ENCODE measurements at regions of chr1 and their contacts with region 1.

Region 1: DNA sequence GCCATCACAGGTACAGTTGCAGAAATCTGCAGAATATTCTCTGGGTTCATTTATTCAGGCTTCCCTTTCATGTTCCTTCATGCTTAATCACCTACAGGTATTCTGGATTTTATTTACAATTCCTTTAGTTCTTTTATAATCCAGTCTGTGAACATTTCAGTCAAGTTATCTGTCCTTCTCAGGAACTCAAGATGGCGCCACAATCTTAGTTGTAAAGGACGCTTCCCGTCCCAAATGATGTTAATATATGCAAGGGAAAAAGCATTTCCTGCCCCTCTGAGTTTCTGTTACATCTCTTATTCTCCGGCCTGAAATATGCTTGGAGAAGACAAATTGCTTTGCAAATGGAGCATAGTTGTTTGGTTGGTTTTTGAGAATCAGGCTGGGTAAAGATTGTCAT is 19.3 kb downstream of the F3 start:
- DNase-seq: no peak
- ATAC-seq: peak; percentile 65
- H3K4me3 ChIP-seq: no peak overlapping the region
- H3K27ac ChIP-seq: no peak overlapping the region
- H3K4me1 ChIP-seq: peaks cover 0 to under 1% of the 10 kb centered on the region in 2 donors
- H3K27me3 ChIP-seq: no peaks in the 10 kb centered on the region

Region 2: GRCh38 chr1:94599095-94599813 is 77.0 kb after region 1 on chr1:
- intact Hi-C with region 1: loop called in 1 of 2 experiments (anchors 5 kb)
- DNase-seq: no peak
- ATAC-seq: peak; percentile 68
- H3K4me3 ChIP-seq: no peak overlapping the region
- H3K27ac ChIP-seq: no peak overlapping the region
- H3K4me1 ChIP-seq: no peaks in the 10 kb centered on the region
- H3K27me3 ChIP-seq: no peaks in the 10 kb centered on the region

Region 3: GRCh38 chr1:94658221-94658620 is 135.9 kb after region 1 on chr1:
- intact Hi-C with region 1: no loop called
- DNase-seq: no peak
- ATAC-seq: peak; percentile 86
- H3K4me3 ChIP-seq: no peak overlapping the region
- H3K27ac ChIP-seq: no peak overlapping the region
- H3K4me1 ChIP-seq: peaks cover 0 to 9% of the 10 kb centered on the region in 2 donors
- H3K27me3 ChIP-seq: no peaks in the 10 kb centered on the region

Measured in aorta (tissue), 5 donors.